ENCODE measurements at regions of chr1 and their contacts with region 1.

Region 1: DNA sequence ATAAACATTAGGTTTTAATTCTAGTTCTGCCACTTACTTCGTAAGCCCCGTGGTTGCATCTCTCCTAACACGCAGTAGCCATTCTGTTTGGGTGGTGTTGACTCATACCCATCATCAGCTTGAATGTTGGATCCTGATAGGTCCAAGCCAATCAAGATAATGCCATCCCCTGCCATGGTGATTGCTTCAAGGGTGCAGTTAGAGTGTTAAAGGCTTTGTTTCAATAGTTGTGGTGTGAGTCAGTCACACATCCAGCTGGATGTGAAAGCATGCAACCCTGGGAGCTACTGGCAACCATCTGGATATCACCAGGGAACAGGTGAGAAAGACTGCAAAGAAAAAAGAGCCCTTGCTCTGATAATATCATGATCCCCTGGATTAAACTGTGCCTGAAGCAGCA is 69.1 kb downstream of the OMA1 start:
- DNase-seq: no peak
- ATAC-seq: no peak
- H3K4me3 ChIP-seq: no peak overlapping the region
- H3K27ac ChIP-seq: no peak overlapping the region
- H3K4me1 ChIP-seq: no peaks in the 10 kb centered on the region
- H3K27me3 ChIP-seq: no peaks in the 10 kb centered on the region
- CTCF ChIP-seq: no peak
- POLR2A ChIP-seq: no peak
- RAD21 ChIP-seq: no peak

Region 2: DNA sequence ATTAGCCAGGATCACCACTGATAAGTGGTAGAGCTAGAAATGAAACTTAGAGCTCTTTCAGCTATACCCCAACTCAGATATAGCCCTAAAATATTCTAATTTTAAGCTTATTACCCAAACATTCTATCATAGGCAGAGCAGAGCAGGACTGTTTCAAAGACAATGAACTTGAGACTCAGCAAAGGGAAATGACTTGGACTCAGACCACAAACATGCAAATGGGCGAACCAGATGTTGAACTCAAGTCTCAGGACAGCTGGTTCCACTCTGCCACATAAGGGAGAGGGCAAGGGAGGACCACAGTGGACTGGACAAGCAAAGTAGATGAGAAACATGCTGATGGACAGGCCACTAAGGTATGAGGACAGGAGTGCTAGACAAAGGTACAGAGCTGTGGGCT is 246.2 kb before region 1 on chr1:
- CTCF ChIA-PET with region 1: no interaction called
- POLR2A ChIA-PET with region 1: no interaction called
- dilution Hi-C with region 1: no loop called
- in situ Hi-C with region 1: no loop called
- intact Hi-C with region 1: no loop called
- DNase-seq: no peak
- ATAC-seq: no peak
- H3K4me3 ChIP-seq: no peak overlapping the region
- H3K27ac ChIP-seq: no peak overlapping the region
- H3K4me1 ChIP-seq: no peaks in the 10 kb centered on the region
- H3K27me3 ChIP-seq: no peaks in the 10 kb centered on the region
- CTCF ChIP-seq: no peak
- POLR2A ChIP-seq: no peak
- RAD21 ChIP-seq: no peak

Region 3: GRCh38 chr1:58266242-58266641 is 211.1 kb before region 1 on chr1:
- CTCF ChIA-PET with region 1: no interaction called
- POLR2A ChIA-PET with region 1: no interaction called
- dilution Hi-C with region 1: no loop called
- in situ Hi-C with region 1: no loop called
- intact Hi-C with region 1: loop called (anchors 10 kb)
- DNase-seq: no peak
- ATAC-seq: no peak
- H3K4me3 ChIP-seq: no peak overlapping the region
- H3K27ac ChIP-seq: no peak overlapping the region
- H3K4me1 ChIP-seq: no peaks in the 10 kb centered on the region
- H3K27me3 ChIP-seq: no peaks in the 10 kb centered on the region
- CTCF ChIP-seq: no peak
- POLR2A ChIP-seq: no peak
- RAD21 ChIP-seq: no peak

Region 4: DNA sequence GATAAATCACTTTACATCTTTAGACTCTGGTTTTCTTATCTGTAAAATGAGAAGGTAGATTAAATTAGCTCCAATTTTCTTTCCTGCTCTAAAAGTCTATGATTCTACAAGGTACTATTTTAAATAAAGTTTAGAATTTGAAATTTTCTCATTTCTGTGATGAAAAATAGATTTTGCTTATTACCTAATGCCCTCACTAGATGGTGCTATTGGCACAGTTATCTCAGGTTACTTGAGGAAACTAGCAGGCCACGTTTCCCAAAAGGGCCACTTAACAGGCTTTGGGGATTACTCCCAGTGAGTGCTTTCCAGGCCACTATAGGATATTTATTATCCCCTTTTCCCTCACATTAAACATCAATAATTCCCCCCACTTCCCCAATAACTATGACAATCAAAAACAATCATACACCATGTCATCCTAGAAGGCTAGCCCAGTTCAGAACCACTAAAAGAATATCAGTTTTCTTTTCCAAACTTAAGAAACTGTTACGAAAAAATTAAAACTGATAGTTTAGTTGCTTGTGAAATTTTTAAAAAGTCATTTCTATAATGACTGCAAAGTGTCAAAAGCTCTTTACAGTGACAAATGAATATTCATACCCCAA is 38.5 kb after region 1 on chr1:
- CTCF ChIA-PET with region 1: no interaction called
- POLR2A ChIA-PET with region 1: no interaction called
- dilution Hi-C with region 1: no loop called
- in situ Hi-C with region 1: no loop called
- intact Hi-C with region 1: no loop called
- DNase-seq: peak; percentile 85
- ATAC-seq: peak; percentile 79
- H3K4me3 ChIP-seq: no peak overlapping the region
- H3K27ac ChIP-seq: no peak overlapping the region
- H3K4me1 ChIP-seq: no peaks in the 10 kb centered on the region
- H3K27me3 ChIP-seq: no peaks in the 10 kb centered on the region
- CTCF ChIP-seq: peak; percentile 85
- POLR2A ChIP-seq: no peak
- RAD21 ChIP-seq: peak; percentile 86